Spleen (tissue), 13 donors: ENCODE measurements at regions of chr12 and their contacts with region 1.

Region 1: DNA sequence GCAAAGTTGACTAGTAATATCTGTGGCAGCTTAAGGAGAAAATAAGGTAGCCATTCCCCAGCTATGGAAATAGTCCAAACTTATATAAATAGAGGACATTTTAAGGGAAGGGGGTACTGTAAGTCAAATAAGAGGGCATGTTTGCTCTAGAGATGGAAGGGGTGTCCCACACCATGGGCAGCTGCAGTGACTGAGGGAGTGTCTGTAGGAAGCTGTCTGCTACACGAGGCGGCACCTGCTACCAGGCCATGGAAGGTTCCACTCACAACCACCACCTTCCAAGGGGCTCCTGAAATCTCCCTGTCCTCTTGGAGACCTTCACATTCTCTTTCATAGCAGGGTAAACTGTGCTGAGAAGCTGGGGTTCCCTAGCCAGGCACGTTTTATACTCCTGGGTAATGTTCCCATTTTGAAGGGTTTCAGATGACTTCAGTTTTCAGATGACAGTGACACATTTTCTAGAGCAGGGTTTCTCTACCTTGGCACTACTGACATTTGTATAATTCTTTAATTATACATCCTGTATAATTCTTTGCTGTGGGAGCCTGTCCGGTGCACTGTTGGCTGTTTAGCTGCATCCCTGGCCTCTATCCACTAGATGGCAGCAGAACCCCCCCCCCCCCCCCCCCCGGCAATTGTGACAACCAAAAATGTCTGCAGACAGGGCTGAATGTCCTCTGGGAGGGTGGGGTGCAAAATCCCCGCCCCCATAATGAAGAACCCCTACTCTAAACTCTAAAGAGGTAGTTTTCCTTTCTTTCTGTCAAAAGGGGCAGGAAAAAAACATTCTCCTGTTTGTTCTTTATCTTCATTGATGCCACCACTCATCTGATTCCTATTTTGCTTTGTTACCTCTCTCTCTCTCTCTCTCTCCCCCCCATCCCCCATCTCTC is 11.6 kb upstream of the SMCO2 start:
- DNase-seq: no peak
- H3K4me3 ChIP-seq: no peak overlapping the region
- H3K27ac ChIP-seq: no peak overlapping the region
- H3K4me1 ChIP-seq: peaks cover 0 to 27% (median 5%) of the 10 kb centered on the region in 6 donors
- H3K27me3 ChIP-seq: no peaks in the 10 kb centered on the region
- CTCF ChIP-seq: peak in 9 of 11 experiments; percentile 26 to 80 (median 61)
- POLR2A ChIP-seq: no peak

Region 2: GRCh38 chr12:27383429-27384260 is 51.3 kb before region 1 on chr12:
- intact Hi-C with region 1: no loop called
- DNase-seq: peak; percentile 83
- H3K4me3 ChIP-seq: no peak overlapping the region
- H3K27ac ChIP-seq: no peak overlapping the region
- H3K4me1 ChIP-seq: no peaks in the 10 kb centered on the region
- H3K27me3 ChIP-seq: no peaks in the 10 kb centered on the region
- CTCF ChIP-seq: peak; percentile 29 to 90 (median 76)
- POLR2A ChIP-seq: no peak

Region 3: GRCh38 chr12:27652174-27652763 is 217.3 kb after region 1 on chr12:
- intact Hi-C with region 1: loop called (anchors 5 kb)
- DNase-seq: no peak
- H3K4me3 ChIP-seq: no peak overlapping the region
- H3K27ac ChIP-seq: no peak overlapping the region
- H3K4me1 ChIP-seq: peaks cover 0 to 16% (median 0%) of the 10 kb centered on the region in 6 donors
- H3K27me3 ChIP-seq: no peaks in the 10 kb centered on the region
- CTCF ChIP-seq: peak; percentile 8 to 84 (median 74)
- POLR2A ChIP-seq: no peak